Caco-2 (cell line): ENCODE measurements at regions of chr6 and their contacts with region 1.

Region 1: GRCh38 chr6:32244946-32245398 is 21.1 kb upstream of the NOTCH4 start:
- DNase-seq: peak; percentile 75 to 81
- H3K4me3 ChIP-seq: no peak overlapping the region
- H3K4me3 Mint-ChIP-seq: peak overlapping the region; percentile 20
- H3K27ac Mint-ChIP-seq: no peak overlapping the region
- H3K4me1 ChIP-seq: no peaks in the 10 kb centered on the region
- H3K4me1 Mint-ChIP-seq: peaks cover 7% of the 10 kb centered on the region
- H3K27me3 ChIP-seq: no peaks in the 10 kb centered on the region
- H3K27me3 Mint-ChIP-seq: no peaks in the 10 kb centered on the region
- CTCF ChIP-seq: peak; percentile 87

Region 2: DNA sequence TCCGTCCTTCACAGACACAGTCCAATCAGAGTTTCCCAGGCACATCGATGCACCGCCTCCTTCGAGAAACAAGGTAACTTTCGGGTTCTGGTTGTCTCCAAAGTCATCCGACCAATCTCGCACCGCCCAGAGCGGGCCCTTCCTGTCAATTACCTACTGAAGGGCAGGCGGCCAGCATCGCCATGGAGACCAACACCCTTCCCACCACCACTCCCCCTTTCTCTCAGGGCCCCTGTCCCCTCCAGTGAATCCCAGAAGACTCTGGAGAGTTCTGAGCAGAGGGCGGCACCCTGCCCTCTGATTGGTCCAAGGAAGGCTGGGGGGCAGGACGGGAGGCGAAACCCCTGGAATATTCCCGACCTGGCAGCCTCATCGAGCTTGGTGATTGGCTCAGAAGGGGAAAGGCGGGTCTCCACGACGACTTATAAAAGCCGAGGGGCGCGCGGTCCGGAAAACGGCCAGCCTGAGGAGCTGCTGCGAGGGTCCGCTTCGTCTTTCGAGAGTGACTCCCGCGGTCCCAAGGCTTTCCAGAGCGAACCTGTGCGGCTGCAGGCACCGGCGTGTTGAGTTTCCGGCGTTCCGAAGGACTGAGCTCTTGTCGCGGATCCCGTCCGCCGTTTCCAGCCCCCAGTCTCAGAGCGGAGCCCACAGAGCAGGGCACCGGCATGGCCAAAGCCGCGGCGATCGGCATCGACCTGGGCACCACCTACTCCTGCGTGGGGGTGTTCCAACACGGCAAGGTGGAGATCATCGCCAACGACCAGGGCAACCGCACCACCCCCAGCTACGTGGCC is 417.5 kb before region 1 on chr6 and contains the start of gene HSPA1B:
- CTCF ChIA-PET with region 1: no interaction called
- POLR2A ChIA-PET with region 1: no interaction called
- intact Hi-C with region 1: no loop called
- DNase-seq: peak; percentile 98 to 100
- H3K4me3 ChIP-seq: peak within 1 kb of the TSS; percentile 71
- H3K4me3 Mint-ChIP-seq: peak within 1 kb of the TSS; percentile 96
- H3K27ac Mint-ChIP-seq: peak within 1 kb of the TSS; percentile 99
- H3K4me1 ChIP-seq: peaks cover 39% of the 10 kb centered on the region
- H3K4me1 Mint-ChIP-seq: peaks cover 10% of the 10 kb centered on the region
- H3K27me3 ChIP-seq: no peaks in the 10 kb centered on the region
- H3K27me3 Mint-ChIP-seq: no peaks in the 10 kb centered on the region
- CTCF ChIP-seq: no peak
- total RNA-seq, gene HSPA1B: 99.0 and 112 TPM in 2 replicates

Region 3: DNA sequence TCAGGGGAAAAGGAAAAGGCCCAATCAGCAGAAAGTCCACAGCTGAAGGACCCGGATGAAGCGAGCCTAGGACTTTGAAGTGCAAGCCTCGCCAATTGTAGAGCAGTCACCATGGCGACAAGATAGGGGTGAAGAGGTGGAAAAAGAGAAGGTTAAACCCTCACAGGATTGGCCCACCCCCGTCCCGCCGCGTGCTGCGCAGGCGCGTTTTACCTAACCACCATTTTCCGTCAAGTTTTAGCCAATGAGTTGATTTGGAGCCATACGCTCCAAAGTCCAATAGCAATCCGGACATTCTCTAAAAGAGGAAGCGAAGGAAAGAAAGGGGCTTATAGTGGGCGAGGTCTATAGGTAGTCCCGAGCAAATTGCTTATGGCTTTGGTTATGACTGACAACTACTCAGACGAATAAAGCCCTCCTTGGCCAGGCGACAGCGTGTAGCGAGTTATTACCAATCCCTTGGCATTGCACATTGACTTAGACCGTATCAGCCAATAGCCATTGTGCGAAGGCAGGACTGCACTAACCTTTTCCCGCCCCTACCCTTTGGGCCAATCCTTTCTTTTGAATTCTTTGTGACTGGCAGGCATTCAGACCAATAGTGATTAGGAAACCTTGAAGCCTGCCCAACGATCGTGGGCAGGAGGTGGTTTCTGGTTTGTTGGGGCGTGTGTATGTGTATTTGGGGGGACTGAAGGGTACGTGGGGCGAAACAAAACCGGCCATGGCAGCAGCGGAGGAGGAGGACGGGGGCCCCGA is 67.0 kb before region 1 on chr6 and contains the start of gene RNF5:
- CTCF ChIA-PET with region 1: interaction called, 17 read pairs
- POLR2A ChIA-PET with region 1: no interaction called
- intact Hi-C with region 1: no loop called
- DNase-seq: peak; percentile 97 to 99
- H3K4me3 ChIP-seq: peak within 1 kb of the TSS; percentile 87
- H3K4me3 Mint-ChIP-seq: peak within 1 kb of the TSS; percentile 81
- H3K27ac Mint-ChIP-seq: peak within 1 kb of the TSS; percentile 94
- H3K4me1 ChIP-seq: peaks cover 15% of the 10 kb centered on the region
- H3K4me1 Mint-ChIP-seq: peaks cover 46% of the 10 kb centered on the region
- H3K27me3 ChIP-seq: no peaks in the 10 kb centered on the region
- H3K27me3 Mint-ChIP-seq: no peaks in the 10 kb centered on the region
- CTCF ChIP-seq: no peak
- total RNA-seq, gene RNF5: 64.7 and 70.7 TPM in 2 replicates

Region 4: DNA sequence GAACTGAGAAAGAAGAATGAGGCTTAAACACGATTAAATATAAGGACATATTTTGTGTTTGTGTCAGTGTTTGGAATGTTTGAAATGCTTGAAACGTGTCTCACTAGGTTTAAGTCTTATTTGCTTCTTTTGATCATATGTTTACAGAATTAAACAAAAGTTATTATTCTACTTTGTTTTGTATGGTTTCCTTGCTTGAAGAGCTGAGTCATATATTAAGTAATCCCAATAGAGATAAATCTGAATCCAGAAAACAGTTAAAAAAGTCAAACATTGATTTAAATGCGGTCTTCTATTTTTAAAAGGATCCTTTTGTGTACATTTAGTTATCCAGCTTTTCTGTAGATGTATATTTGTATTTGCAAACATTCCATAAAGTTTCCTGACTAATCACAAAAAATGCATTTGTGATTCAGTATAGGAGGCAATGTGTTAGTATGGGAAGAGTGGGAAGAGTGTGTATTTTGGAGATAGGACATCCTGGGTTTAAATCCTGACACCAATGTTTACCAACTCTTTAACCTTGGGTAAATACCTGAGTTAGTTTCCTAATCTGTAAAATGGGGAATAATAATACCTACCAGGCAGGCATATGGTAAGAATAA is 53.8 kb after region 1 on chr6:
- CTCF ChIA-PET with region 1: interaction called, 3 read pairs
- POLR2A ChIA-PET with region 1: no interaction called
- intact Hi-C with region 1: loop called (anchors 5 kb)
- DNase-seq: peak in 1 of 2 experiments; percentile 8
- H3K4me3 ChIP-seq: no peak overlapping the region
- H3K4me3 Mint-ChIP-seq: no peak overlapping the region
- H3K27ac Mint-ChIP-seq: peak overlapping the region; percentile 73
- H3K4me1 ChIP-seq: peaks cover 7% of the 10 kb centered on the region
- H3K4me1 Mint-ChIP-seq: peaks cover 16% of the 10 kb centered on the region
- H3K27me3 ChIP-seq: no peaks in the 10 kb centered on the region
- H3K27me3 Mint-ChIP-seq: no peaks in the 10 kb centered on the region
- CTCF ChIP-seq: no peak

Region 5: DNA sequence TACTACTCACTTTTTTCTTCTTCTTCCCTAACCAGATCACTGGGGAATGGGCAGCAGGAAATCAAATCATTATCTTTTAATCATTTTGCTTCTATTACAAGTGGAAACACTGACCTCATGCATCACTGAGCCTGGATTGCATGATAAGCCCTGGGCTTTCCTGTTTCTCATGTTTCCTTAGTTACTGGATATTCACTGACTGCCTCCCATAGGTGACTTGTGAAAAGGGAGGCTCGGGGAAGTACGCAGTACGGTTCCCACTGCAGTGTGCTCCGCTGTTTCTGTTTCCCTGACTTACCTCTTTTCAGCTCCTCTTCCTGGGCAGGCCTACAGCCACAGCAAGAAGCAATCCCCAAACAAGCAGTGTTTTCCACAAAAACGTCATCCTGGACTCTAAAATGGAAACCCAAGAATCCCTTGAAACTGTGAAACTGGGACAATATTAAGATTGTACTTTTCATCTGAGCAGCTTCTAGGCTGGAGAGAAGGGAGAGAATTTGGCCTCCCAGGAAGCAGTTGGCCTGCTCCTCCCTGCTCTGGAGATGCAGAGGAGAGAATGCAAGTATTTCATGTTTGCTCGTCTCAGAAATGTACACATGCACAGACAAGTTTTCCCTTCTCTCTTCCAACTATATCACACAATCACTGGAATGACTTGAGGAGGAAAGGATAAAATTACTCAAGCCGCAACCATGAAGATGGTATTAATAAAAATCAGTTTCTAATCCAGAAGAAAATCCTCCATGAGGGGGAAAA is 148.9 kb after region 1 on chr6:
- CTCF ChIA-PET with region 1: no interaction called
- POLR2A ChIA-PET with region 1: no interaction called
- intact Hi-C with region 1: loop called (anchors 5 kb)
- DNase-seq: peak in 1 of 2 experiments; percentile 22
- H3K4me3 ChIP-seq: no peak overlapping the region
- H3K4me3 Mint-ChIP-seq: no peak overlapping the region
- H3K27ac Mint-ChIP-seq: no peak overlapping the region
- H3K4me1 ChIP-seq: no peaks in the 10 kb centered on the region
- H3K4me1 Mint-ChIP-seq: peaks cover 7% of the 10 kb centered on the region
- H3K27me3 ChIP-seq: no peaks in the 10 kb centered on the region
- H3K27me3 Mint-ChIP-seq: no peaks in the 10 kb centered on the region
- CTCF ChIP-seq: no peak

Region 6: GRCh38 chr6:32413427-32414047 is 168.6 kb after region 1 on chr6:
- CTCF ChIA-PET with region 1: no interaction called
- POLR2A ChIA-PET with region 1: no interaction called
- intact Hi-C with region 1: loop called (anchors 1 kb)
- DNase-seq: peak; percentile 75 to 85
- H3K4me3 ChIP-seq: no peak overlapping the region
- H3K4me3 Mint-ChIP-seq: peak overlapping the region; percentile 33
- H3K27ac Mint-ChIP-seq: no peak overlapping the region
- H3K4me1 ChIP-seq: no peaks in the 10 kb centered on the region
- H3K4me1 Mint-ChIP-seq: peaks cover 16% of the 10 kb centered on the region
- H3K27me3 ChIP-seq: no peaks in the 10 kb centered on the region
- H3K27me3 Mint-ChIP-seq: peaks cover 15% of the 10 kb centered on the region
- CTCF ChIP-seq: peak; percentile 93 to 94

Region 7: GRCh38 chr6:32700391-32701040 is 455.5 kb after region 1 on chr6:
- CTCF ChIA-PET with region 1: no interaction called
- POLR2A ChIA-PET with region 1: no interaction called
- intact Hi-C with region 1: loop called (anchors 1 kb)
- DNase-seq: peak; percentile 31 to 67
- H3K4me3 ChIP-seq: no peak overlapping the region
- H3K4me3 Mint-ChIP-seq: no peak overlapping the region
- H3K27ac Mint-ChIP-seq: no peak overlapping the region
- H3K4me1 ChIP-seq: no peaks in the 10 kb centered on the region
- H3K4me1 Mint-ChIP-seq: no peaks in the 10 kb centered on the region
- H3K27me3 ChIP-seq: no peaks in the 10 kb centered on the region
- H3K27me3 Mint-ChIP-seq: peaks cover 10% of the 10 kb centered on the region
- CTCF ChIP-seq: peak; percentile 28 to 41

Region 8: DNA sequence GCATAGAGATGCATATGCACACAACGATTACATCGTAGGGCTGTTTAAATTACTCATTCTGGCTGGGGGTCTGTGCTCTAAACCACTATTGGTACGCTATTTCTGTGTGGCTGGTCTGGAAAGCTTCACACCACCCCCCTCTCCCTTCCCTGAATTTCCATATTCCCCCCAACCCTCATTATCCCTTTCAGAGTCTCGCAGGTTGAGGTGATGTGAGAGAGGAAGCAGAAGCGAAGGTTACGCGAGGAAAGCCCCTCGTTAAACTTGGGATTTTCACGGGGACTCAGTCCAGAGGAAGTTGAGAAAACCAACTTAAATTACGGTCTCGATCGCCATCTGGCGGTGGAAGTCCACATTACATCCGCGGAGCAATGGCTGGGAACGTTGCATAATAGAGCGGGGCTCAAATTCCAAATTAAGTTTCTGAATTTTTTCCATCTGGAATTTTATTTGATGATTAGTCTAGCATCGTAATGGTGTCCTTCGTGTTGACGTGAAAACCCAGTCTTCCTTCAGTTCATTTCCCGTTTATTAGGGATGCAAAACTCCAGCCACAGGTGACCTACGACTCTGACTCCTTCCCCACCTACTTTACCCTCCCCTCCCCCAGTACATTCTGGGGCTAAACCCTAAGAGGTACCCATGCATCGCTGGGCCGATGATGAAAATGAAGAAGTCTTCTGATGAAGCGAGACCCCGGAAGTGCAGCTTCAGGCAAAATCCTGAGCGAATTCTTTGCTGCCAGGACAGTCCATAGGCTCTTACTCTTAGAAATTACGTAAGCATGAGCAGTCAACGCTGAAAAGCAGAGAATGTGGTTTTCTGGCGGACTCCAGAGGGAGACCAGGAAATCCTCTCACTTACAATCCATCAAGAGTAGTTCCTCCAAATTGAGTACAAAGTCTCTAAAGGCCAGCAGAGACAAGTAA is 552.1 kb after region 1 on chr6:
- CTCF ChIA-PET with region 1: no interaction called
- POLR2A ChIA-PET with region 1: no interaction called
- intact Hi-C with region 1: loop called (anchors 10 kb)
- DNase-seq: peak; percentile 63 to 73
- H3K4me3 ChIP-seq: no peak overlapping the region
- H3K4me3 Mint-ChIP-seq: peak overlapping the region; percentile 56
- H3K27ac Mint-ChIP-seq: no peak overlapping the region
- H3K4me1 ChIP-seq: no peaks in the 10 kb centered on the region
- H3K4me1 Mint-ChIP-seq: no peaks in the 10 kb centered on the region
- H3K27me3 ChIP-seq: no peaks in the 10 kb centered on the region
- H3K27me3 Mint-ChIP-seq: peaks cover 25% of the 10 kb centered on the region
- CTCF ChIP-seq: peak; percentile 72 to 90